HEK293 (cell line): ENCODE measurements at regions of chr17 and their contacts with region 1.

Region 1: GRCh38 chr17:32461853-32462617 is 17.7 kb downstream of the PSMD11 start:
- H3K4me3 ChIP-seq: no peak overlapping the region
- H3K27ac ChIP-seq: no peak overlapping the region
- H3K4me1 ChIP-seq: no peaks in the 10 kb centered on the region
- CTCF ChIP-seq: no peak

Region 2: GRCh38 chr17:32281011-32281451 is 181.0 kb before region 1 on chr17:
- CTCF ChIA-PET with region 1: no interaction called
- POLR2A ChIA-PET with region 1: no interaction called
- H3K4me3 ChIP-seq: no peak overlapping the region
- H3K27ac ChIP-seq: no peak overlapping the region; the same call in 1 of the 2 replicates
- H3K4me1 ChIP-seq: peaks cover 3% of the 10 kb centered on the region; the same call in 1 of the 2 replicates
- CTCF ChIP-seq: no peak

Region 3: DNA sequence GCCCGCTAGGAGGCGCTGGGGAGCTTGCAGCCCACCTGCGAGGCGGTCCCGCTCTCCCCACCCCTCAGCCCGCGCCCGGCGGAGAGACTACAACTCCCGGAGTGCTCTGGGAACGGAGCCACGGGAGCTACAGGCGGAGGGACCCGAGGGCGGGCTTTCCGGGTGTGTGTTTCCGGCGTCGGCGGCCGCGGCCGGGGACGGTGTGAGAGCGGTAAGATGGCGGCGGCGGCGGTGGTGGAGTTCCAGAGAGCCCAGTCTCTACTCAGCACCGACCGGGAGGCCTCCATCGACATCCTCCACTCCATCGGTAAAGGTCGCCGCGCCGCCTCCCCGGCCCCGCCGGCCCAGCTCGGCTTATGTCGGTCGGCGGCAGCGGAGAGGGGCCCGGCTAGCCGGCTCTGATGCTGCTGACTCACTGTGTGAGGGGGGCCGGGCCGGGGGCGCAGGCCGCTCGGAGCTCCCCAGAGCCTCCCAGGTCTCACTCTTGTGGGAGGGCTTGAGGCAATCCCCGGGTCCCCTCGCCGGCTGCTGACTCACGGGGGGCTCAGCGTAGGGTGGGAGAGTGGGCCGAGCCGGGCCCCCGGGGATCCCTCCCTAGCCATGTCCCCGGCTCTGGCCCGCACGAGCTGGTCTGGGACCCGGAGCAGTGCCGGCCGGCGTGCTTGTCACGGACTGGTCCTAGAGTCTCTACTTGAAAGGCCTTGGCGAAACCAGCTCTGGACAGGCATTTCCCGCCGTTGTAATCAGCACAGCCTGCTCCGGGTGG is 17.5 kb before region 1 on chr17 and contains the start of gene PSMD11:
- CTCF ChIA-PET with region 1: interaction called, 198 read pairs
- POLR2A ChIA-PET with region 1: interaction called, 4 read pairs
- H3K4me3 ChIP-seq: peak within 1 kb of the TSS; percentile 94
- H3K27ac ChIP-seq: peak within 1 kb of the TSS; percentile 92
- H3K4me1 ChIP-seq: peaks cover 9% of the 10 kb centered on the region
- CTCF ChIP-seq: peak; percentile 97

Region 4: GRCh38 chr17:32479074-32479617 is 17.1 kb after region 1 on chr17:
- CTCF ChIA-PET with region 1: interaction called, 70 read pairs
- POLR2A ChIA-PET with region 1: interaction called, 3 read pairs
- H3K4me3 ChIP-seq: no peak overlapping the region
- H3K27ac ChIP-seq: no peak overlapping the region
- H3K4me1 ChIP-seq: peaks cover 3% of the 10 kb centered on the region; the same call in 1 of the 2 replicates
- CTCF ChIP-seq: no peak

Region 5: DNA sequence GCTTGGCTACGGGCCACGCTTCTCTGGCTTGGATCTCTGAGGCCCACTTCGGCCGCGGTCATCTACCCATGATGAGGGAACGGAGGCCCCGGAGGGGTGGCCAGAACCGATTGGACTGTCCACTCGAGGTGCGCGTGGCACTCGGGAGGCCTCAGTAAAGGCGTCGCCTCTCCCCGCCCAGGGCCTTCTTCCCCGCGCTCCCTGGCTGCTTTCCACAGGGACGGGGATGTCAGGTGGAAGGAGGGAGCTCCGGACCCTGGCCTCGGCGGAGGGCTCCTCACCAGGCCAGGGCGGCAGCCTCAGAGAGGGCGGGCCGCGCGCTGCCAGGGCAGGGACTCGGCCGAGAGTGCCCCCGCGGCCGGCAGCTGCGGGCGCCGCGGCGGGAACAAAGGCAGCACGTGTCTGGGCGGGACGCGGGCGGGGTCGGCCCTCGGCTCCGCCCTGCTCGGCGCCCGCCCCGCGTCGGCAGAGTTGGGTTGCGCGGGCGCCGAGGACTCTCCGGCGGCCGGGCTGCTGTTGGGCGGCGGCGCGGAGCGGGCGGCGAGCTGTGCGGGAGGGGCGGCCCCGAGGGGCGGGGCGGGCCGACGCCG is 24.2 kb after region 1 on chr17:
- CTCF ChIA-PET with region 1: interaction called, 50 read pairs
- POLR2A ChIA-PET with region 1: interaction called, 3 read pairs
- H3K4me3 ChIP-seq: peak overlapping the region; percentile 57
- H3K27ac ChIP-seq: peak overlapping the region; percentile 80; the same call in 1 of the 2 replicates
- H3K4me1 ChIP-seq: peaks cover 31% of the 10 kb centered on the region
- CTCF ChIP-seq: no peak

Region 6: GRCh38 chr17:32727681-32728080 is 265.6 kb after region 1 on chr17:
- CTCF ChIA-PET with region 1: interaction called, 10 read pairs
- POLR2A ChIA-PET with region 1: no interaction called
- H3K4me3 ChIP-seq: no peak overlapping the region
- H3K27ac ChIP-seq: no peak overlapping the region
- H3K4me1 ChIP-seq: no peaks in the 10 kb centered on the region
- CTCF ChIP-seq: no peak

Region 7: GRCh38 chr17:32746280-32746679 is 284.2 kb after region 1 on chr17:
- CTCF ChIA-PET with region 1: interaction called, 12 read pairs
- POLR2A ChIA-PET with region 1: no interaction called
- H3K4me3 ChIP-seq: no peak overlapping the region
- H3K27ac ChIP-seq: no peak overlapping the region
- H3K4me1 ChIP-seq: no peaks in the 10 kb centered on the region
- CTCF ChIP-seq: no peak

Region 8: GRCh38 chr17:32755045-32755805 is 293.2 kb after region 1 on chr17:
- CTCF ChIA-PET with region 1: interaction called, 36 read pairs
- POLR2A ChIA-PET with region 1: no interaction called
- H3K4me3 ChIP-seq: no peak overlapping the region
- H3K27ac ChIP-seq: no peak overlapping the region
- H3K4me1 ChIP-seq: no peaks in the 10 kb centered on the region
- CTCF ChIP-seq: peak; percentile 26; the same call in 1 of the 2 replicates